ENCODE measurements at regions of chr22 and their contacts with region 1.

Region 1: DNA sequence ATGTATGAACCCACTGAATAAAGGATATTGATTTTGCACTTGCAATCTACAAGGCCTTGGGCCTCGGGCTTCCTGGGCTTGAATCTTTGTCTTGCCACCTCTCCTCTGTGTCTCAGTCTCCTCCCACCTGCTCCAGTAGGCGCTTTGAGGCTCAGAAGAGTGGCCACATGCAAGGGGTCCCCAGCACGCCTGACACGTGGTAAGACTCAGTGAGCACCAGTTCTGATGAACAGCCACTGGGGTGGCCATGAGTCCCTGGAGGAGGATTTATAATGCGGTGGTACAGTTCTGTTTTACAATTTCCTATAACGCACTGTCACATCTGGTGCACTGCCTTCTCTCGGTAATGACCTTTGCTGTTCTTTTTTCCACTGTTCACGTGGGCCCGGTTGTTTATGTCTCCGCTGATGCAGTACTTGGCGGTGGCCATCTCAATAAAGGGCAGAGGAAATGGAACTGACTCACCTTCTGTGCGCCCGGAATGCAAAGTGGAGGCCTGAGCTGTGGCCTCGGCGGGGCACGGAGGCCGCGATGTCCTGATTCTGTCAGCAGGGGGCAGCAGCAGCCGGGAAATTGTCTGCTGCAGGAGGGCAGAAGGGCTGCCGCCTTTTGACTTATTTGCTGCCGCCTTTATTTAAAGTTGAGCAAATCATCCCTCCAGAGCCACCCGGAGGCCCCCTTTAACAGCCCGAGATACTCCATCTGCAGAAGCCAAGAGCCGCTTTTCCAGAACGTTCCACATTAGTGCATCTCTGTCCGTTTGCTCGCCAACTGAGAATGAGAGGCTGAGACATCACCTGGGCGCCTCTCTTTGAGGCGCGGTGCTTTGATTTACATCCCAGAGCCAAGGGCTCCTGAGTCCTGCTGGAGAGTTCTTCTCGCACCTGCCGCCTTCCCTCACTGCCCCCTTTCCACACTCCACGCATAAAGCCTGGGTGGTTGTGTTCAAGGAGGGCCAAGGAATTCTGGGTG is 6.0 kb upstream of the IFT27 start:
- DNase-seq: peak; percentile 66
- H3K4me3 ChIP-seq: no peak overlapping the region
- H3K27ac ChIP-seq: no peak overlapping the region
- H3K4me1 ChIP-seq: no peaks in the 10 kb centered on the region
- H3K27me3 ChIP-seq: no peaks in the 10 kb centered on the region
- CTCF ChIP-seq: peak; percentile 90

Region 2: DNA sequence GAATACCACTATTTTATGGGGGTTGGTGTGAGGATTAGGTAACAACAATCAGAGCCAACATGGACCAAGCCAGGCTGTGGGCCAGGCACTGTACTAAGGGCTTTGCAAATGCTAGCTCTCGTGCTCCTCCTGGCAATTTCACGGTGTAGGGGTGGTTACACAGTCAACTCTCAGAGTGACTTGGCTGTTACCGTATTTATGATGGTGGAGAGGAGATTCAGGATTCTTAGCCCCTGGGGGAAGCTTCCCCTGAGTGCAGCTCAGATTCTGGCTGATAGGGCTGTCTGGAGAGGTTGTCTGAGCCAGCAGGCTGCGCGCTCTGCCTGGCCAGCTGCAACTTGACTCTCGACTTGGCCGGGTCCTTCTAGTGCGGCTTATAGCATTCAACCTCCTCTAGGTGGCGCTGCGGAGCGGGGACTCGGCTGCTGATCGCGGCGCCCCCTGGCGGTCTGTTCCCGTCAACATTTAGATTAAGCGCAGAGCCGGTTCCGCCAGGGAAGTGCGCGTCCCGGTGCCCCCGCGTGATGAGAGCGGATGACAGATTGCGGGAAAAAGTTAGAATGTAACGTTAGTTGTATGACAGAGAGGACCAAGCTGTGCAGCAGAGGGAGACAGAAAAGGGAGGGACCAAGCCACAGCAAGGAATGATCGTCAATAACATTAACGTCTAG is 74.3 kb after region 1 on chr22:
- CTCF ChIA-PET with region 1: interaction called, 3 read pairs
- POLR2A ChIA-PET with region 1: no interaction called
- intact Hi-C with region 1: loop called (anchors 1 kb)
- DNase-seq: peak; percentile 88
- H3K4me3 ChIP-seq: no peak overlapping the region
- H3K27ac ChIP-seq: no peak overlapping the region
- H3K4me1 ChIP-seq: no peaks in the 10 kb centered on the region
- H3K27me3 ChIP-seq: peaks cover 12% of the 10 kb centered on the region
- CTCF ChIP-seq: peak; percentile 100

Region 3: GRCh38 chr22:36913427-36914389 is 131.8 kb after region 1 on chr22 and contains the start of gene CSF2RB:
- CTCF ChIA-PET with region 1: no interaction called
- POLR2A ChIA-PET with region 1: no interaction called
- intact Hi-C with region 1: no loop called
- DNase-seq: no peak
- H3K4me3 ChIP-seq: no peak within 1 kb of the TSS
- H3K27ac ChIP-seq: no peak within 1 kb of the TSS
- H3K4me1 ChIP-seq: no peaks in the 10 kb centered on the region
- H3K27me3 ChIP-seq: peaks cover 54% of the 10 kb centered on the region
- CTCF ChIP-seq: no peak
- total RNA-seq, gene CSF2RB: not detected in 2 replicates

Measured in A673 (cell line).